IMR-90 (cell line): ENCODE measurements at regions of chr16 and their contacts with region 1.

Region 1: GRCh38 chr16:67159593-67160406 is at the starts of genes FBXL8 and TRADD:
- DNase-seq: peak; percentile 41
- ATAC-seq: peak; percentile 73
- H3K4me3 ChIP-seq: peak within 1 kb of the TSS; percentile 86
- H3K27ac ChIP-seq: peak within 1 kb of the TSS; percentile 69
- H3K4me1 ChIP-seq: peaks cover 20% of the 10 kb centered on the region; the same call in 1 of the 2 replicates
- H3K27me3 ChIP-seq: peaks cover 10% of the 10 kb centered on the region; the same call in 1 of the 2 replicates
- CTCF ChIP-seq: peak; percentile 48
- POLR2A ChIP-seq: peak; percentile 43; the same call in 1 of the 2 replicates
- RAD21 ChIP-seq: peak; percentile 12; the same call in 1 of the 2 replicates
- total RNA-seq, gene FBXL8: 1.9 and 2.3 TPM in 2 replicates
- total RNA-seq, gene TRADD: 8.1 and 8.6 TPM in 2 replicates

Region 2: GRCh38 chr16:66894948-66895688 is 264.7 kb before region 1 on chr16:
- CTCF ChIA-PET with region 1: no interaction called
- POLR2A ChIA-PET with region 1: no interaction called
- dilution Hi-C with region 1: no loop called
- in situ Hi-C with region 1: no loop called
- intact Hi-C with region 1: loop called (anchors 10 kb)
- DNase-seq: peak; percentile 76
- ATAC-seq: peak; percentile 85
- H3K4me3 ChIP-seq: no peak overlapping the region
- H3K27ac ChIP-seq: no peak overlapping the region
- H3K4me1 ChIP-seq: peaks cover 15% of the 10 kb centered on the region
- H3K27me3 ChIP-seq: no peaks in the 10 kb centered on the region
- CTCF ChIP-seq: peak; percentile 98
- POLR2A ChIP-seq: peak; percentile 59; the same call in 1 of the 2 replicates
- RAD21 ChIP-seq: peak; percentile 99

Region 3: DNA sequence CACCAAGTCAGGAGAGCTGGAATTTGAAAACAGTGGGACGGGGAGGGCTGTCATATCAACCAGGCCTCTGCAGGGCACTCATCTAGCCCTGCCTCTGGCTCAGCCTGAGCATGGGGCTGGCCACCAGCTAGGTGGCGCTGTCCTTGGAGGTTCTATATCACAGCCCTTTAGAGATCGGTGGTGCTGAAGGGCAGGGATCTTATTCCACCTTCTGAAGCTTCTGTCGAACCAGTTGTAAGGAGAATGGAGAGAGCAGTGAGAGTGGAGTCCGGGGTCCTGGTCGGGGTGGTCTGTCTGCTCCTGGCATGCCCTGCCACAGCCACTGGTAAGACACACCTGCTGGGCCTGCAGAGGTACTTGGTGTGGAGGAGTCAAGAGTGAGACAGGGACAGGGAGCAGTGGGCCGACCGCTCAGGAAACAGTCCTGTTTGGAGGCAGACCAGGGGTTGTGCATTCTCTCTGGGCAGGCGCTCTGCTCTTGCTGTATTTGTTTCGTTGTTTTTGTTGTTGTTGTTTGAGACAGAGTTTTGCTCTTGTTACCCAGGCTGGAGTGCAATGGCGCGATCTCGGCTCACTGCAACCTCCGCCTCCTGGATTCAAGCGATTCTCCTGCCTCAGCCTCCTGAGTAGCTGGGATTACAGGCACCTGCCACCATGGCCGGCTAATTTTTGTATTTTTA is 198.6 kb before region 1 on chr16 and contains the start of gene CES3:
- CTCF ChIA-PET with region 1: interaction called, 4 read pairs
- POLR2A ChIA-PET with region 1: no interaction called
- dilution Hi-C with region 1: no loop called
- in situ Hi-C with region 1: loop called (anchors 5 kb)
- intact Hi-C with region 1: no loop called
- DNase-seq: peak; percentile 58
- ATAC-seq: peak; percentile 99
- H3K4me3 ChIP-seq: no peak within 1 kb of the TSS
- H3K27ac ChIP-seq: no peak within 1 kb of the TSS
- H3K4me1 ChIP-seq: no peaks in the 10 kb centered on the region
- H3K27me3 ChIP-seq: peaks cover 36% of the 10 kb centered on the region
- CTCF ChIP-seq: peak; percentile 71
- POLR2A ChIP-seq: no peak
- RAD21 ChIP-seq: peak; percentile 37
- total RNA-seq, gene CES3: under 0.01 TPM in 1 of 2 replicates, not detected in the other

Region 4: GRCh38 chr16:67017810-67018488 is 141.9 kb before region 1 on chr16:
- CTCF ChIA-PET with region 1: interaction called, 15 read pairs
- POLR2A ChIA-PET with region 1: no interaction called
- dilution Hi-C with region 1: no loop called
- in situ Hi-C with region 1: no loop called
- intact Hi-C with region 1: no loop called
- DNase-seq: peak; percentile 95
- ATAC-seq: peak; percentile 75
- H3K4me3 ChIP-seq: no peak overlapping the region
- H3K27ac ChIP-seq: no peak overlapping the region
- H3K4me1 ChIP-seq: peaks cover 9% of the 10 kb centered on the region
- H3K27me3 ChIP-seq: peaks cover 2% of the 10 kb centered on the region; the same call in 1 of the 2 replicates
- CTCF ChIP-seq: peak; percentile 89
- POLR2A ChIP-seq: no peak
- RAD21 ChIP-seq: peak; percentile 91

Region 5: GRCh38 chr16:67129422-67129821 is 30.4 kb before region 1 on chr16:
- CTCF ChIA-PET with region 1: no interaction called
- POLR2A ChIA-PET with region 1: no interaction called
- dilution Hi-C with region 1: no loop called
- in situ Hi-C with region 1: no loop called
- intact Hi-C with region 1: no loop called
- DNase-seq: no peak
- ATAC-seq: no peak
- H3K4me3 ChIP-seq: no peak overlapping the region
- H3K27ac ChIP-seq: no peak overlapping the region
- H3K4me1 ChIP-seq: no peaks in the 10 kb centered on the region
- H3K27me3 ChIP-seq: no peaks in the 10 kb centered on the region
- CTCF ChIP-seq: no peak
- POLR2A ChIP-seq: no peak
- RAD21 ChIP-seq: no peak

Region 6: GRCh38 chr16:67183627-67184328 is 24.0 kb after region 1 on chr16 and contains the start of gene MATCAP1:
- CTCF ChIA-PET with region 1: interaction called, 8 read pairs
- POLR2A ChIA-PET with region 1: no interaction called
- dilution Hi-C with region 1: no loop called
- in situ Hi-C with region 1: no loop called
- intact Hi-C with region 1: loop called (anchors 1 kb)
- DNase-seq: peak; percentile 97
- ATAC-seq: peak; percentile 91
- H3K4me3 ChIP-seq: peak within 1 kb of the TSS; percentile 62
- H3K27ac ChIP-seq: peak within 1 kb of the TSS; percentile 87
- H3K4me1 ChIP-seq: peaks cover 11% of the 10 kb centered on the region
- H3K27me3 ChIP-seq: no peaks in the 10 kb centered on the region
- CTCF ChIP-seq: no peak
- POLR2A ChIP-seq: peak; percentile 90
- RAD21 ChIP-seq: no peak; the same call in 1 of the 2 replicates
- total RNA-seq, gene MATCAP1: 7.5 and 8.2 TPM in 2 replicates